ENCODE measurements at regions of chr6 and their contacts with region 1.

Region 1: DNA sequence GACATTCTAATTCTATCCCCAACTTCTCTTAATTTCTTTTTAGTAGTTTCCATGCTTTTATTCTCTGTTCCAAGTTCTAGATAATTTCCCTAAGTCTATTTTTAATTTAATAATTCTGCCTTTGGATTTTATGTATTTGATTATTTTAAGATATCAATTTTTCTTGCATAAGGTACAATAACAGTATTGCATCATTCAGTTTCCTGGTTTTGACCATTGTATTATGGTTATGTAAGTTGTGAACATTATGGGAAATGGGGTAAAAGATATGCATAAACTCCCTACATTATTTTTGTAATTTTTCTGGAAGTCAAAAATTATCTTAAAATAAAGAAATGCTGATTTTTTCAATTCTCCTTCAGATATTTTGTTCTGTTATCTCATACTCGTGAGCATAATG is 21.1 kb upstream of the CENPW start:
- DNase-seq: no peak
- H3K4me3 ChIP-seq: no peak overlapping the region
- H3K27ac ChIP-seq: no peak overlapping the region
- H3K4me1 ChIP-seq: no peaks in the 10 kb centered on the region
- H3K27me3 ChIP-seq: no peaks in the 10 kb centered on the region
- CTCF ChIP-seq: no peak
- POLR2A ChIP-seq: no peak

Region 2: GRCh38 chr6:127092466-127092865 is 773.7 kb after region 1 on chr6:
- intact Hi-C with region 1: loop called (anchors 5 kb)
- DNase-seq: no peak
- H3K4me3 ChIP-seq: no peak overlapping the region
- H3K27ac ChIP-seq: no peak overlapping the region
- H3K4me1 ChIP-seq: no peaks in the 10 kb centered on the region
- H3K27me3 ChIP-seq: no peaks in the 10 kb centered on the region
- CTCF ChIP-seq: no peak
- POLR2A ChIP-seq: no peak

Measured in breast epithelium (tissue), 4 donors.